Activated CD4-positive, alpha-beta memory T cell treated with anti-CD3 and anti-CD28 coated beads, Interleukin-2, amount 10 ng/mL, durations not matched to agents 7 days and 5 days (primary cell): ENCODE measurements at regions of chr15 and their contacts with region 1.

Region 1: DNA sequence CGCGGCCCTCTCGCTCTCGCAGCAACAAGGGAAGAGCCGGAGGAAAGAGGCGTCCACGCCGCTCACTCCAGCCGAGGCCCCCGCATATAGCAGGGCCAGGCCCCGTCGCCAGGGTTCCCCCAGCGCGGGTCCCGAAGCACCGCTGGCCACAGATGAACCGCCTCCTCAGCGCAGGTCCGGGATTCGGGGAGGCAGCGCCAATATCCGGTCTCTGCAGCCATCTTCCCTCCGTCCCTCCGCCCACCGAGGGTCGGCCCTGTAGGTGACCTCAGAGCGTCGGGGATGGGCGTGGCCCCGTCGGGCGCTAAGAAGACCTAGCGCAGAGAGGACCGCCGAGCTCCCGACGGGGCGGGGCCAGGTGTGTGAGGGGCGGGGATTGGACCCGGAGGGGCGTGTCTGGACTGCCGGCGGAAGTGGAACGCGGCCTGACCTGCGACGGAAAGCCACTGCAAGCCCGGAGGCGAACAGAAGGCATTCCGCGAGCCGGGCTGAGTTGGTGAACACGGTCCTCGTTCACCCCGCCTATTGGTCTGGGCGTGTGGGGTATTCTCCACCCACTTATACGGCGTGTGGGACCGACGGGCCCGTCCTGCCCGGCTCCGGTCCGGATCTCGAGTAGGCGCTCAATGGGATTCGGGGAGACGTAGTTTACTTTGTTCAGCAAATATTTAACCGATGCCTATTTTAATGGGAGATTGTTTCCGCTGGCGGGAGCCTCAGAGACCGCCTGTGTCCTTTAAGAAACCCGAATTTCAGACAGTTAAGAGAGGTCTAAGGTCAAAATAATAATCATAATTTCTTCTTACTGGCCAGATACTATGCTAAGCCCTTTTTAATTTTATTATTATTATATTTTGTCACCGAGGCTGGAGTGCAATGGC is 26.9 kb upstream of the MTHFS start:
- DNase-seq: peak; percentile 99
- H3K4me3 Mint-ChIP-seq: peak overlapping the region; percentile 89
- H3K27ac Mint-ChIP-seq: peak overlapping the region; percentile 93
- H3K4me1 Mint-ChIP-seq: peaks cover 30% of the 10 kb centered on the region
- H3K27me3 Mint-ChIP-seq: no peaks in the 10 kb centered on the region

Region 2: DNA sequence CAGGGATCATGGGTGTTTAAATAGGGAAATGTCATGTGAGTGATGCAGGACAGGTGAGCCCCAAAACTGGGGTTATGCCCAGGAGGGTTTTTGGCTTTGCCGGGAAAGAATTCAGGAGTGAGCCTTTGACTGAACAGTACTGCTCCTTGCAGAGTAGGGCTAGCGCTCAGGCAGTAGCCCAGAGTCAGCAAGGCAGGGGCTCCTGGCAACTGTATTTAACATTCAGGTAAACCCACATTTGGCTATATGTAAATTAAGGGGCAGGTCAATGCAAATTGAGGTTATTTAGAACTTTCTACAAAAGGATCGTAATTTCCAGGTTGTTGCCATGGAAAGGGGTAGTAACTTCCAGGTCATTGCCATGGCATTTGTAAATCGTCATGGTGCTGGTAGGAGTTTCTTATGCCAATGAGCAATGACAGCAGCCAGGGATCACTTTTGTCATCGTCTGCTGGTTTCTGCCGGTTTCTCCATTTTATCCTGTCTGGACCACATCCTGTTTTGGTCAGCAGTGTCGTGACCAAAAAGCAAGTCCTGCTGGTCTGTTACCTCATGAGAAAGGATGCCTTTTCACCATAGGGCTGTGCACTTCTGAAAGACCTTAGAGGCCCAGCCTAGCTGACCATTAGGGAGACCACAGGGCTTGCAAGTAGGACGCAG is 51.3 kb before region 1 on chr15:
- CTCF ChIA-PET with region 1: no interaction called
- POLR2A ChIA-PET with region 1: interaction called, 16 read pairs
- DNase-seq: peak; percentile 68
- H3K4me3 Mint-ChIP-seq: no peak overlapping the region
- H3K27ac Mint-ChIP-seq: peak overlapping the region; percentile 25
- H3K4me1 Mint-ChIP-seq: peaks cover 16% of the 10 kb centered on the region
- H3K27me3 Mint-ChIP-seq: no peaks in the 10 kb centered on the region

Region 3: GRCh38 chr15:79948095-79948695 is 24.4 kb after region 1 on chr15:
- CTCF ChIA-PET with region 1: interaction called, 3 read pairs
- POLR2A ChIA-PET with region 1: interaction called, 10 read pairs
- DNase-seq: no peak
- H3K4me3 Mint-ChIP-seq: no peak overlapping the region
- H3K27ac Mint-ChIP-seq: peak overlapping the region; percentile 54
- H3K4me1 Mint-ChIP-seq: peaks cover 13% of the 10 kb centered on the region
- H3K27me3 Mint-ChIP-seq: no peaks in the 10 kb centered on the region

Region 4: DNA sequence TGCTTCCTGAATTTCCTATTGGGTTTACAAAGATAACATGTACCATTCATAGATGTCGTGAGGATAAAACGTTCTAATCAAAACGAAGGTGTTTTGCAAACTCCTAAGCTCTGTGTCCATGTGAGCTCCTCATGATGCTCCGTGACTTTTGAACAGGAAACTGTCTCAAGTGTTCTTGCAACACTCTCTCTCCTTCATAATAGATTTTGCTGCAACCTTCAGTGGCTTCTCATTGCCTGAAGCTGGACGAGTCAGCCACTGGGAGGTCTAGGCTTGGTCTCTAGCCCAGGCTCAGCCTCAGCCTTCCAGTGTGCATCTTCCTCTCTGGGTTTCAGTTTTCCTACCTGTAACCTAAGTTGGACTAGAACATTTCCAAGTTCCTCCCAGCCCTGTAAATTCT is 65.9 kb after region 1 on chr15:
- CTCF ChIA-PET with region 1: interaction called, 8 read pairs
- POLR2A ChIA-PET with region 1: interaction called, 11 read pairs
- DNase-seq: no peak
- H3K4me3 Mint-ChIP-seq: no peak overlapping the region
- H3K27ac Mint-ChIP-seq: no peak overlapping the region
- H3K4me1 Mint-ChIP-seq: peaks cover 3% of the 10 kb centered on the region
- H3K27me3 Mint-ChIP-seq: peaks cover 2% of the 10 kb centered on the region

Region 5: DNA sequence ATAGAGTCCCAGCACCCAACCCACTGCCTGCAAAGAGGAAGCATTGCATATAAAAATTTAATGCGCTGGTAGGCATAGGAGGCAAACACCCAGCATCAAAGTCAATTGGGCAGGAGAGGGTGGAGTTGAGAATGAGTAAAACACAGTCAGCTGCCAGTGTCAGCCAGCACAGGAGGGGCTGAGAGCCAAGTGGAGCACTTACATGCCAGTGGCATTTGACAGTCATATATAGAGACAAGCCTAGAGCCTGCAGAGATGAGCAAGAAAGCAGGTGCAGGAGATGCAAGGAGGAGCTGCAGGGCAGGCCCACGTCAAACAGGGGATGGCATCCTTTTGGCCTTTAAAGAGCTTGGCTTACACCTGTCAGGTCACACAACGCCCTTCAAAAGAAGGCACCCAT is 108.1 kb after region 1 on chr15:
- CTCF ChIA-PET with region 1: no interaction called
- POLR2A ChIA-PET with region 1: no interaction called
- DNase-seq: peak; percentile 30
- H3K4me3 Mint-ChIP-seq: no peak overlapping the region
- H3K27ac Mint-ChIP-seq: peak overlapping the region; percentile 83
- H3K4me1 Mint-ChIP-seq: peaks cover 35% of the 10 kb centered on the region
- H3K27me3 Mint-ChIP-seq: no peaks in the 10 kb centered on the region

Region 6: DNA sequence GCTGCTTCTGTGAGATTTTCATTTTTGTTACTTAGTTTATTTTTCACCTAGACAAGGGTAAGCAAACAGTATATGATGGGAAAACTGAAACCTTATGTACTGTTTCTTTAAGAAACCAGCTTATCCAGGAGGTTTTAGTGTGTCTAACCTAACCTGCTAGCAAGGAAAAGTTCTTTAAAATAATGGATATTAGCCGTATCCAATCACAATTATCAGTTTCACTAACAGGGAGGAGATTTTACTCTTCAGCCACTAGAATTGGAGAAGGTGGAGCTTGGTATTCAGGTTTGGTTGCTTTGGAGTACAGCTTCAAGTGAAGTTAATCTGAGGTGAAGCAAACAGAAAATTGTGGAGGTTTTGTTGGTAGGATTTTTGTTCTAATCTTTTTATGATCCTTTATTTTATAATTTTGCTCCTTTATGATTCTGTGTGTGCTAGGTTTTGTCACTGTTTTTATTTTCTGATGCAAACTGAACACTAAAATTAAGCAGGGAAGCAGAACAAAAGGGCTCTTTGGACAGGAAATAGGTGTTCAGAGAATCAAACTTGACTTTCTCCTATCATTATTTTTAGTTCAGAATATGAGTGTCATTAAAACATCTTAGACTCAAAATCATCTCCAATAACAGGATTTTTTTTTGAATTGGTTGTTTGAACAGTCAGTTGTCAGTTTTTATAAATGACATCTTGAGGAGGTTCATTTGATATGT is 148.7 kb after region 1 on chr15:
- CTCF ChIA-PET with region 1: no interaction called
- POLR2A ChIA-PET with region 1: interaction called, 10 read pairs
- DNase-seq: no peak
- H3K4me3 Mint-ChIP-seq: peak overlapping the region; percentile 71
- H3K27ac Mint-ChIP-seq: peak overlapping the region; percentile 50
- H3K4me1 Mint-ChIP-seq: peaks cover 36% of the 10 kb centered on the region
- H3K27me3 Mint-ChIP-seq: no peaks in the 10 kb centered on the region